MCF 10A (cell line): ENCODE measurements at regions of chr15 and their contacts with region 1.

Region 1: DNA sequence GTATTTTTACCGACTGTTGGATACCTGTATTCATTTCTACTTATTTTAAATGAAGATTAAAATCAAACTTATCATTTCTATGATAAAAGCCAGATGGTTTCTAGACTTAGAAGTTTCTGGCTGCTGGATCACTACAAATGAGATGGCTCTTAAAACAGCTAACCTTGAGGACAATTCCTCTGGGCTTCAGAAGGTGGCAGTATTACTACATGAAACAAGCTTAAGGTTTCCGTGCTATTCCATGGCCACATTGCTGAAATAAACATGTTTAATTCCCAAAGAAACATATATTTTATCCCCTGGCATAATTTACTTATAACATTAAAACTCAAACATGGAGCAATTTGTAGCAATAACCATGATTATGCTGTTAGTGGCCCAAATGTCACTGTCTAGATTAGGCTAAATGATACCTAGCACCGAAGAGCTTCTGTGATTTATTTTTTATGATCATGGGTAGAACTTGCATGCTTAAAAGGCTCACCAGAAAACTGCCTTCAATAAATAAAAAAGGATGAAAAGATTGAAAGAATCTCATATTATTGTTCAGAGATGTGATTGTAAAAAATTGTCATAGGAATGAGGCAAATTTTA is 204.0 kb upstream of the NANOGP8 start:
- DNase-seq: peak; percentile 61
- H3K4me3 Mint-ChIP-seq: no peak overlapping the region
- H3K27ac Mint-ChIP-seq: no peak overlapping the region
- H3K4me1 Mint-ChIP-seq: peaks cover 11% of the 10 kb centered on the region
- H3K27me3 Mint-ChIP-seq: no peaks in the 10 kb centered on the region
- CTCF ChIP-seq: peak; percentile 64

Region 2: GRCh38 chr15:35078221-35078915 is 210.8 kb before region 1 on chr15:
- CTCF ChIA-PET with region 1: interaction called, 30 read pairs
- POLR2A ChIA-PET with region 1: no interaction called
- intact Hi-C with region 1: loop called (anchors 2 kb)
- DNase-seq: peak; percentile 52
- H3K4me3 Mint-ChIP-seq: no peak overlapping the region
- H3K27ac Mint-ChIP-seq: no peak overlapping the region
- H3K4me1 Mint-ChIP-seq: no peaks in the 10 kb centered on the region
- H3K27me3 Mint-ChIP-seq: no peaks in the 10 kb centered on the region
- CTCF ChIP-seq: peak; percentile 81

Region 3: GRCh38 chr15:35427091-35427490 is 138.0 kb after region 1 on chr15:
- CTCF ChIA-PET with region 1: interaction called, 16 read pairs
- POLR2A ChIA-PET with region 1: no interaction called
- intact Hi-C with region 1: no loop called
- DNase-seq: peak; percentile 34
- H3K4me3 Mint-ChIP-seq: no peak overlapping the region
- H3K27ac Mint-ChIP-seq: no peak overlapping the region
- H3K4me1 Mint-ChIP-seq: peaks cover 6% of the 10 kb centered on the region
- H3K27me3 Mint-ChIP-seq: no peaks in the 10 kb centered on the region
- CTCF ChIP-seq: no peak

Region 4: GRCh38 chr15:35519541-35520149 is 230.5 kb after region 1 on chr15:
- CTCF ChIA-PET with region 1: no interaction called
- POLR2A ChIA-PET with region 1: no interaction called
- intact Hi-C with region 1: loop called (anchors 5 kb)
- DNase-seq: peak; percentile 64
- H3K4me3 Mint-ChIP-seq: no peak overlapping the region
- H3K27ac Mint-ChIP-seq: no peak overlapping the region
- H3K4me1 Mint-ChIP-seq: peaks cover 6% of the 10 kb centered on the region
- H3K27me3 Mint-ChIP-seq: no peaks in the 10 kb centered on the region
- CTCF ChIP-seq: peak; percentile 53

Region 5: DNA sequence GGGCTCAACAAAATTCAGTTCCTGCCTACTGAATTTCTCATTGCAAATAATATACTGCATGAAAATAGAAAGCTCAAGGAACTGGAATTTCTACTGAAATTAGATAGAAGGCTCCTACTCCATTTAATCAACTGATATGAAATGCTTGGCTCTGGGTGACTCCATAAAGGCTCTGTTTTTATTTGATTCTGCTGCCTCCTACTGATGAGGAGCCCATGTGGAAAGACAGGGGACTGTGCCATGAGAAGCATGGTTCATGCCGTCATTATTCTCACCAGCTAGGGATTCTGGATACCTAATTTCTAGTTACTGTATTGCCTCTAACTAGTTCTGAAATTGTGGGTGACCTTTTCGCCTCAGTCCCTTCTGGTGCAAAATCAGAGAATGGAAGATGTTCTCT is 623.1 kb after region 1 on chr15:
- CTCF ChIA-PET with region 1: no interaction called
- POLR2A ChIA-PET with region 1: no interaction called
- intact Hi-C with region 1: loop called (anchors 1 kb)
- DNase-seq: peak; percentile 28
- H3K4me3 Mint-ChIP-seq: no peak overlapping the region
- H3K27ac Mint-ChIP-seq: no peak overlapping the region
- H3K4me1 Mint-ChIP-seq: no peaks in the 10 kb centered on the region
- H3K27me3 Mint-ChIP-seq: no peaks in the 10 kb centered on the region
- CTCF ChIP-seq: peak; percentile 31